SK-N-SH (cell line): ENCODE measurements at regions of chr11 and their contacts with region 1.

Region 1: GRCh38 chr11:8209208-8209807 is 40.5 kb upstream of the RIC3 start:
- DNase-seq: no peak
- H3K4me3 ChIP-seq: no peak overlapping the region
- H3K27ac ChIP-seq: no peak overlapping the region
- H3K4me1 ChIP-seq: peaks cover 0 to 27% of the 10 kb centered on the region in 2 experiments; a peak in 2 of 4 replicates
- H3K27me3 ChIP-seq: no peaks in the 10 kb centered on the region; the same call in 1 of the 2 replicates
- CTCF ChIP-seq: peak; percentile 48
- EP300 ChIP-seq: no peak
- RAD21 ChIP-seq: no peak

Region 2: DNA sequence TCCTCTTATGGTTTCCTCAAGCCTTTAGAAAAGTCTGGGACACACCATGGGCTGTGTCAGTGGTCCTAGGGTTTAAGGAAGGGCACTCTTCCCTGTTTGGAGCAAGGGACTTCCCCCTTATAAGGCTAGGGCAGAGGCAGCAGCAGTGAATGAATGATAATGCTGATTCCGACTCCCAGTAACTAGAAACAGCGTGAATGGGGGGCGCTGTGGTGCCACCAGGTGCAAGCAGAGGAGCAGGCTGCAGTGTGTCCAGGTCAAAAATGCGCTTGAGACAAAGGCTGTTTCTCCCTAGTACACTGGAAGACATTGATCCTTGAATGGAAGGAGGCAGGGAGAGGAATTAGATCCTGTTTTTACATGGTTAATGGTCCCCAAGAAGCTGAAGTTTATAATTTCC is 28.8 kb before region 1 on chr11:
- CTCF ChIA-PET with region 1: no interaction called
- POLR2A ChIA-PET with region 1: no interaction called
- DNase-seq: no peak
- H3K4me3 ChIP-seq: no peak overlapping the region
- H3K27ac ChIP-seq: no peak overlapping the region
- H3K4me1 ChIP-seq: no peaks in the 10 kb centered on the region; a peak in 1 of 4 replicates
- H3K27me3 ChIP-seq: peaks cover 5% of the 10 kb centered on the region; the same call in 1 of the 2 replicates
- CTCF ChIP-seq: no peak
- EP300 ChIP-seq: no peak
- RAD21 ChIP-seq: no peak

Region 3: DNA sequence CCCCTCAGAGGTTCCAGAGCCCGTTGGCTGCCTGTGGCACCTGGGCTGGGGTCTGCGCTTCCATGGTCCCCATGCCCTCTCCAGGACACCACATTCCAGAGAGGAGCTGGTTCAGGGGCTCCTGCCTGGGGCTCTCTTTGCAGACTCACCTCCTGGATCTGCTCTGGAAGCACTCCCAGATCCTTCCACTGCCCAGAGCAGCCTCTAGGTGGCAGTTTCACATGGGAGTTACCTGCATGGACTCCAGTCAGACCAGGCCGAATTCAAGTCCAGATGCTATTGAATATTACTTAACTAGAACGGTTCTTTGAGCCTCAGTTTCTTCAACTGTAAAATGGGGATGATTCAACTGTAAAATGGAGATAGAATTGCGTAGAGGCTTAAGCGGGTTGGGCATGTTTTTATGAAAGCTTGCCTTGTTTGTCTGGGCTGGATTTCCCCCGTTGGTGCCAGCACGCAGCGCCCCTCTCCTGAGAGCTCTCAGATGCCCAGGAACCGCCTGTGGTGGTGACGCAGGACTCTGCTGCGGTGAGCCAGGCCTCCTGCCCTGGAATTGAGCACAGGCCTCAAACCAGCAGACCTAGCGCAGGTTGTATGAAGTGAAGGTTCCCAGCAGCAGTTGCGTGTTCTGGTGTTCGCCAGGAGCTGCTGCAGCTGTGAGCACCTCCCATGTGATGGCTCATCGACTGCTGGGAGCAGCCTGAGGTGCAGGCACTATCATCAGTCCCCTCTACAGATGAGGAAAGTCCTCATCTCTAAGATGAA is 10.1 kb after region 1 on chr11:
- CTCF ChIA-PET with region 1: interaction called, 10 read pairs
- POLR2A ChIA-PET with region 1: interaction called, 5 read pairs
- DNase-seq: peak; percentile 80
- H3K4me3 ChIP-seq: no peak overlapping the region
- H3K27ac ChIP-seq: no peak overlapping the region; a peak in 1 of 4 replicates
- H3K4me1 ChIP-seq: peaks cover 0 to 28% of the 10 kb centered on the region in 2 experiments; a peak in 1 of 4 replicates
- H3K27me3 ChIP-seq: no peaks in the 10 kb centered on the region; the same call in 1 of the 2 replicates
- CTCF ChIP-seq: peak; percentile 75
- EP300 ChIP-seq: no peak
- RAD21 ChIP-seq: peak; percentile 69

Region 4: GRCh38 chr11:8225589-8226036 is 16.3 kb after region 1 on chr11:
- CTCF ChIA-PET with region 1: interaction called, 15 read pairs
- POLR2A ChIA-PET with region 1: interaction called, 5 read pairs
- DNase-seq: peak; percentile 94
- H3K4me3 ChIP-seq: no peak overlapping the region; a peak in 1 of 4 replicates
- H3K27ac ChIP-seq: peak overlapping the region in 1 of 2 experiments; percentile 74; a peak in 2 of 4 replicates
- H3K4me1 ChIP-seq: peaks cover 0 to 66% of the 10 kb centered on the region in 2 experiments; a peak in 2 of 4 replicates
- H3K27me3 ChIP-seq: no peaks in the 10 kb centered on the region
- CTCF ChIP-seq: peak; percentile 96
- EP300 ChIP-seq: no peak
- RAD21 ChIP-seq: peak; percentile 97

Region 5: DNA sequence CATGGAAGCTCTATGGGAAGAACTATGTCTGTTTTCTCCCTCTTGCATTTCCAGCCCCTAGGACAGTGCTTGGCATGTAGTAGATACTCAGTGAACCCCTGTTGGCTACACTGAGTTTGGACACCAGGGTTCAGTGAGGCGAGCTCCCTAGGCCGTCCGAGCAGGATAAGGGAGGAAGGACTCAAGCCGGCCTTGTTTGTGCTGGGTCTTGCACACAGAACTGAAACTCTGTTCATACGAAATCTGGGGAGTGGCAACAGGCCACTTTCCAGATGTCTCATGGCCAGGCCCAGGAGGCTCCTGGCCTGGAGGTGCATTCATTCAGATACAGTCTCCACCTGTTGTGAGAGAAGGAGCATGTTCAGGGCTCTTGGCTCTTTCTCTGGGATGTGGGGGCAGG is 78.0 kb after region 1 on chr11:
- CTCF ChIA-PET with region 1: no interaction called
- POLR2A ChIA-PET with region 1: no interaction called
- DNase-seq: no peak
- H3K4me3 ChIP-seq: no peak overlapping the region
- H3K27ac ChIP-seq: no peak overlapping the region
- H3K4me1 ChIP-seq: peaks cover 0 to 54% of the 10 kb centered on the region in 2 experiments; a peak in 2 of 4 replicates
- H3K27me3 ChIP-seq: no peaks in the 10 kb centered on the region; the same call in 1 of the 2 replicates
- CTCF ChIP-seq: no peak
- EP300 ChIP-seq: no peak
- RAD21 ChIP-seq: no peak